GM10248 (cell line): ENCODE measurements at regions of chr5 and their contacts with region 1.

Region 1: GRCh38 chr5:157607371-157608161 is 32.0 kb upstream of the ADAM19 start:
- DNase-seq: no peak
- CTCF ChIP-seq: no peak

Region 2: DNA sequence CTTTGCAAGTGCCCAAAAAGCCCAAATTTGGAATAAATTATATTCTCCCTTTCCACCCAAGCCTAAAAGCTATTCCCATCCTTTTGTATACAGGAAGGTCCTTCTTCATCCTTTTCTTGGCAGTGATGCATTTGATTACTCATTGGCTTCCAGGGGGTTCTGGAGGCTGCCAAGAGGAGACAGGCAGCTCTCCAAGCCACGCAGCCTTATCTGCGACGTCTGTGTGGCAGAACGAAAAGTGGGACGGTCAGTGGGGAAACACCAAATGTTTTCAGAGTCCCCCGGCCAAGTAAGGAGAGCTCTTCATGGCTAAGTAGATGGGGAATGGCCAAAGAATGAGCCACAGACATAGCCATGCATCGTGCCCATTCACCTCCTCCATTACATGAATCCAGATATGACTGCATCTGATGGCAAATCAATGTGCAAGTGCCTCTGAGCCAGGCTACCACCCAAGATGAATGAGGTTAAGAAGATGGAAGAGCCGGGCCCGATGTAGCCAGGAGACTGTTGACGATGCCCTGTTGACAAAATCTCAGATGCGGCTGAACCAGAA is 44.1 kb before region 1 on chr5:
- CTCF ChIA-PET with region 1: no interaction called
- POLR2A ChIA-PET with region 1: no interaction called
- DNase-seq: no peak
- CTCF ChIP-seq: no peak

Region 3: GRCh38 chr5:157624144-157624543 is 16.6 kb after region 1 on chr5:
- CTCF ChIA-PET with region 1: interaction called, 11 read pairs
- POLR2A ChIA-PET with region 1: no interaction called
- DNase-seq: no peak
- CTCF ChIP-seq: no peak

Region 4: GRCh38 chr5:157750320-157750719 is 142.8 kb after region 1 on chr5:
- CTCF ChIA-PET with region 1: no interaction called
- POLR2A ChIA-PET with region 1: no interaction called
- DNase-seq: no peak
- CTCF ChIP-seq: no peak